Activated CD4-positive, alpha-beta memory T cell treated with anti-CD3 and anti-CD28 coated beads for 36 hours (primary cell): ENCODE measurements at regions of chr9 and their contacts with region 1.

Region 1: DNA sequence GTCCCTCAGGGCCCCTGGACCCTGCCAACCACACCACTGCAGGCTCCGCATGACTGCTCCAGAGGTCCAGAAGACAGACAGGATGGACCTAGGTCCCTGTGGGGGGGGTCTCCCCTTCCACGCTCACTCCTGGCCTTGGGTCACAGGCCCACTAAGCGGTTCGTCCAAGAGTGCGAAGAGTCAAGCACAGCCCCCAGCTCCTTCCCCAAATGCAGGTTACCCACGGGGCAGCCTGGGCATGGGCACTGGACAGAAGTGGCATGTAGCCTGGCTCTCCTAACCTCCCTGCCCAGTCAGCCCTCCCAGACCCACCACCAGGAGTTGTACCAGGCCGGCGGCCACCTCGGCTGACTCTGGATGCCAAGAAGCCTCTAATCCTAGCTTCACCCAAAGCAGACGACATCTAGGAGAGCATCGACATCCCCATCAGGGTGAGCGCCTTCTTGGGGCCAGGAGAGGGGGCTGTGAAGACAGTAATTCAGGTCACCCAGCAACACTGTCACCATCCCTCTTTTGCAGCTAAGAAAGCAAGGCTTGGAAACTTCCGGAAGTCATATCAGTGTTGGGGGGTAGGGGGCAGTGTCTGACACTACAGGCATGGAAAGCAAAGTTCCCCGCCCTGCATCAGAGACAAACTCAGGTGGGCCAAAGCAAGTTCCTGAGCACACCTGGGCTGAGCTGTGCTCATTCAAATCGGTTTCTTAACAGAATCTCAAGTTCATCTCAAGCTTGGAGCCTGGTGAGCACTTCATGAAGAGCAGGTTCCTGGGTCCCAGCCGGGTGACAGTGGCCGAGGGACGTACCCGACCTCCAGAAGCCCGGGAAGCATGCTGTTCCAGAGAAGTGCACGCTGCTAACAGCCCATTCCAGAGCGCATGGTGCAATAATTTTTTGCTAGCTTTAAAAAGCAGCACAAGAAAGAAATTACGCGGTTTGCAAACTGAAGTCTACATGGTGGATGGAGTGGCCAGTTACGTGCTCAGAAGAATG is 68.7 kb downstream of the SEMA4D start:
- DNase-seq: peak; percentile 76
- H3K4me3 Mint-ChIP-seq: no peak overlapping the region
- H3K27ac Mint-ChIP-seq: peak overlapping the region; percentile 100
- H3K4me1 Mint-ChIP-seq: peaks cover 87% of the 10 kb centered on the region
- H3K27me3 Mint-ChIP-seq: no peaks in the 10 kb centered on the region

Region 2: GRCh38 chr9:89410641-89411350 is 18.4 kb before region 1 on chr9:
- CTCF ChIA-PET with region 1: interaction called, 31 read pairs
- POLR2A ChIA-PET with region 1: interaction called, 17 read pairs
- intact Hi-C with region 1: loop called (anchors 1 kb)
- DNase-seq: peak; percentile 86
- H3K4me3 Mint-ChIP-seq: peak overlapping the region; percentile 70
- H3K27ac Mint-ChIP-seq: peak overlapping the region; percentile 91
- H3K4me1 Mint-ChIP-seq: peaks cover 91% of the 10 kb centered on the region
- H3K27me3 Mint-ChIP-seq: no peaks in the 10 kb centered on the region

Region 3: DNA sequence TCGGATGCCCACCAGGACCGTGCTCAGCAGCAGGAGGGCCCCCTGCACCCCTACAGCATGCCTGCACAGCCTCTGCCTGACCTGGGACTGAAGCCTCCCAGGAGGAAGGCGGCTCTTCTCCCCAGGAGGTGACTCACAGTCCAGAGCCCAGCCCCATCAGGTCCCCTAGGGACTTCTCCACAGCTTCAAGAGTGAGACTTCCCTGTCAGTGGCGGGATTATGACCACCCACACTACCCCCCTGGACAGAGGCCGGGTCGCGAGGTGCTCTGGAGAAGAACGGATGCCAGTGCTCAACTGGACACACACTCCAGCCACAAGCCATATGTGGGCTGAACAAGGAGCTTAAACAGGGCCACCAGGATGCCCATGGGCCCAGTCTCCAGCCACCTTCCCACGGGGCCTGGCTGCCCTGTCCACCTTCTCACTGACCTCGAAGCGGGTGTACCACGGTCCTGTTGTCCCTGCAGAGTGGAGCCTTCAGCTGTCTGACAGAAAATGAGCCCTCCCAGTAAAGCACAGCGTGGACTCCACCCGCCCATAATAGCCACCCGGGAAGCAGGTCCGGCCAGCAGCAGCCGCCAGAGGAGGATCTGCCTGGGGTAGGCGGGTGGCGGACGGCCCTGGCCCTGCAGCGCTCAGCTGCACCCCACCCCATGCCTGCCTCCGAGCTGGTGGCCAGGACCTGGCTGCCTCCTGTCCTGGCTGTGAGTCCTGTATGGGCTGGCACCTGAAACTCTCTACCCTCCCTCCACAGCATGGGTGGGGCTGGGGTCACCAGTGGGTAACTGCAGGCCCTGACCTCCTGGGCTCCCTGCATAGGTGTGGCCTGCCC is 14.0 kb after region 1 on chr9:
- CTCF ChIA-PET with region 1: interaction called, 16 read pairs
- POLR2A ChIA-PET with region 1: interaction called, 14 read pairs
- intact Hi-C with region 1: no loop called
- DNase-seq: no peak
- H3K4me3 Mint-ChIP-seq: no peak overlapping the region
- H3K27ac Mint-ChIP-seq: peak overlapping the region; percentile 51
- H3K4me1 Mint-ChIP-seq: peaks cover 90% of the 10 kb centered on the region
- H3K27me3 Mint-ChIP-seq: no peaks in the 10 kb centered on the region

Region 4: DNA sequence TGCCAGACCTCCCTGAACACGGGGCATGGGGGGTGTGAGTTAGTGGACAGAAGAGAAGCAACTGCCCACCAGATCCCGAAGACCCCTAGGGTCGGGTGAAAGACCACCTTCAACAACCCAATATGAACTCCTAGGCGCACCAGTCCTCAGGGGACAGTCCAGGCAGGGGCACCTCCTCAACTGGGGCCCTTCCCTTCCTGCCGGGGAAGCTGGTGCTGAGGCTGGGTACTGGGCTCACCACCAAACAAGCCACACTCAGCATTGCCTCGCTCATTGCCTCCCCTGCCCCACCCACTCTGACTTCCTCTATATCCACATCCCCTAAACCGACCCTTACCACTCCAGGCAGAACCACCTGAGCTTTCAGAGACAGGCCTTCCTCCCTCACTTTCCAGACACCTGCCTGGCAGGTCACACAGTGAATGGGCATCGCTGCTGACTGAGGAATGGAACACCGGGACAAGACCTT is 26.2 kb after region 1 on chr9:
- CTCF ChIA-PET with region 1: interaction called, 10 read pairs
- POLR2A ChIA-PET with region 1: interaction called, 5 read pairs
- intact Hi-C with region 1: no loop called
- DNase-seq: peak; percentile 58
- H3K4me3 Mint-ChIP-seq: peak overlapping the region; percentile 2
- H3K27ac Mint-ChIP-seq: peak overlapping the region; percentile 88
- H3K4me1 Mint-ChIP-seq: peaks cover 90% of the 10 kb centered on the region
- H3K27me3 Mint-ChIP-seq: no peaks in the 10 kb centered on the region

Region 5: DNA sequence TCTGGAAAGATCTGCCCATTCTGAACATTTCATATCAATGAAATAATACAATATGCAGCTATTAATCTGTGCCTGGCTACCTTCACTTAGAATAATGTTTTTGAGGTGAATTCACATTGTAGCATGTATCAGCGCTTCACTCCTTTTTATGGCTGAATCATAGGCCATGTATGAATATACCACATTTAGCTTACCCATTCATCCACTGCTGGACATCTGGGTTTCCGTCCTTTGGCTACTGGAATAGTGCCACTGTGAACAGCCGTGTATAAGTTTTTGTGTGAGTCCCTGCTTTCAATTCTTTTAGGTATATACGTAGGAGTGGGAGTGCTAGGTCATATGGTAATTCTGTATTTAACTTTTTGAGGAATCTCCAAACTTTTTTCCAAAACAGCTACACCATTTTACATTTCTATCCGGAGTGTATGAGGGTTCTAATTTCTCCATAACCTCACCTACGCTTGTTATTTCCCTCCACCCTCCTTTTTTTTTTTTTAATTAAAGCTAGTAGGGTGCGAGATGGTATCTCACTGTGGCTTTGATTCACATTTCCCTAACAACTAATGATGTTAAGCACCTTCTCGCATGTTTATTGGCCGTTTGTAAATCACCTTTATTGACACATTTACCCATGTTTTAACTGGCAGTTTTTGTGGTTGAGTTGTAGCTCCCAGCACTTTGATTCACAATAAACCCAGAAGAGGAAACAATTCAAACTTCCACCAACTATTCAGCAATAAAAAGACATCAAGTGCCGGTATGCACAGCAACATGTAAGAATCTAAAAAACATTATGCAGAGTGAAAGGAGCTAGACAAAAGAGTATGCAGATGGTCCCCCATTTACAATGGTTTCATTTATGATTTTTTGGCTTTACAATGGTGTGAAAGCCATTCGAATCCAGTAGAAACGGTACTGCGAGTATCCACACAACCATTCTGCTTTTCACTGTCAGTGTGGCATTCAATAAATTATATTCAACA is 60.6 kb after region 1 on chr9:
- CTCF ChIA-PET with region 1: interaction called, 26 read pairs
- POLR2A ChIA-PET with region 1: interaction called, 3 read pairs
- intact Hi-C with region 1: no loop called
- DNase-seq: peak; percentile 9
- H3K4me3 Mint-ChIP-seq: peak overlapping the region; percentile 39
- H3K27ac Mint-ChIP-seq: peak overlapping the region; percentile 70
- H3K4me1 Mint-ChIP-seq: peaks cover 94% of the 10 kb centered on the region
- H3K27me3 Mint-ChIP-seq: no peaks in the 10 kb centered on the region

Region 6: GRCh38 chr9:89522261-89522958 is 93.2 kb after region 1 on chr9:
- CTCF ChIA-PET with region 1: interaction called, 10 read pairs
- POLR2A ChIA-PET with region 1: no interaction called
- intact Hi-C with region 1: no loop called
- DNase-seq: peak; percentile 89
- H3K4me3 Mint-ChIP-seq: peak overlapping the region; percentile 58
- H3K27ac Mint-ChIP-seq: peak overlapping the region; percentile 92
- H3K4me1 Mint-ChIP-seq: peaks cover 89% of the 10 kb centered on the region
- H3K27me3 Mint-ChIP-seq: no peaks in the 10 kb centered on the region